ENCODE measurements at regions of chr2 and their contacts with region 1.

Region 1: GRCh38 chr2:217934321-217935131 is 68.3 kb downstream of the TNS1 start:
- DNase-seq: peak; percentile 79 to 89
- H3K4me3 ChIP-seq: peak overlapping the region; percentile 83 to 89
- H3K27ac ChIP-seq: peak overlapping the region; percentile 95 to 98
- H3K4me1 ChIP-seq: peaks cover 0 to 100% (median 88%) of the 10 kb centered on the region in 4 donors
- H3K27me3 ChIP-seq: no peaks in the 10 kb centered on the region
- CTCF ChIP-seq: no peak

Region 2: GRCh38 chr2:217899231-217900009 is 35.1 kb before region 1 on chr2:
- intact Hi-C with region 1: loop called (anchors 5 kb)
- DNase-seq: peak; percentile 84 to 95
- H3K4me3 ChIP-seq: peak overlapping the region; percentile 44 to 53
- H3K27ac ChIP-seq: peak overlapping the region; percentile 95 to 98
- H3K4me1 ChIP-seq: peaks cover 0 to 99% (median 87%) of the 10 kb centered on the region in 4 donors
- H3K27me3 ChIP-seq: no peaks in the 10 kb centered on the region
- CTCF ChIP-seq: peak; percentile 79 to 85